ENCODE measurements at regions of chr15 and their contacts with region 1.

Region 1: DNA sequence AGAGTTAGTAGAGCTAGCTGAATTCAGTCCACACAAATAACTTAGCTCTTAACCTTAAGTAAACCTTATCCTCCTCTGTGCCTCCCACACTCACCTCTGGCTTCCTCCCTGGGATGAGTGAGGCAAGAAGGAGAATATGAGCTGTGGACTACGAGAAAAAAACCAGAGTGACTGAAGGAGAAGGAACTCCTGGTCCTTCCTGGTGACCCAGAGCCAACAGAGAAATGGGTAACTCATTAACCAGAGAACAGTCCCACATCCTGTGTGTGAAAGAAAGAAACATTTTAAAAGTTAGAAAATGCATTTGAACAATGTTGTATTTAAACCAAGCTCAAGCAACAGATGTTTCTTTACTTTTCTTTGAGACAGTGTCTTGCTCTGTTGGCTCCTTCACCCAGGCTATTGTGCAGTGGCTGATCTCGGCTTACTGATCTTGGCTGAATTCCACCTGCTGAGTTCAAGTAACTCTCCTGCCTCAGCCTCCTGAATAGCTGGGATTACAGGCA is 27.5 kb upstream of the FAM81A start:
- DNase-seq: no peak
- ATAC-seq: no peak
- H3K4me3 Mint-ChIP-seq: peak overlapping the region; percentile 73
- H3K27ac Mint-ChIP-seq: peak overlapping the region; percentile 98
- H3K4me1 Mint-ChIP-seq: peaks cover 84% of the 10 kb centered on the region
- H3K27me3 Mint-ChIP-seq: no peaks in the 10 kb centered on the region
- CTCF ChIP-seq: no peak

Region 2: DNA sequence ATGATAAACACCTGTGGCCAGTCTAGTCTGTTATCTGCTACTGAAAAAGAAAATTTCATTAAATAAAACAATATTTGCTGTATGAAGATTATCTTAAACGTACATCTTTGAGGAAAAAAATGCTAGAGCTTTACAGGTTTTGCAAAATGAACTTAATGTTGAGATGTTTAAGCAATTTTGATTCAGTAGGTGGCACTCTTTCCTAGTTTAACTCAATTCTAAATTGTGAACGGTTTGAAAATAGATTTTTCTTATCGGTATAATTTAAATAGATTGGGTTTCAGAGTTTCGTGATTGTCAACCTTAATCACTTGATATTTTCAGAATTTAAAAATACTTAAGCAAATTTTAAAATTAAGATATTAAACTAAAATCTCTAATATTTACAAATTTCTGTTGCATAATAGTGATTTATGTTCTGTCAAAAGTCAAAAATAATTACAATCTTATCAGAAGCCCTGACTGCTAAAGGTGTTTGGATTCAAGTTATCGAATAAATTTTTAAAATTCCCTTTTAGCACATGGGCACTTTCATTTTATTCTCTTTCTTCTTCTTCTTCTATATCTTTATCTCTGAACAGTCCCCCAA is 430.0 kb before region 1 on chr15:
- CTCF ChIA-PET with region 1: interaction called, 3 read pairs
- POLR2A ChIA-PET with region 1: interaction called, 4 read pairs
- intact Hi-C with region 1: loop called (anchors 2 kb)
- DNase-seq: no peak
- ATAC-seq: no peak
- H3K4me3 Mint-ChIP-seq: peak overlapping the region; percentile 73
- H3K27ac Mint-ChIP-seq: peak overlapping the region; percentile 96
- H3K4me1 Mint-ChIP-seq: peaks cover 62% of the 10 kb centered on the region
- H3K27me3 Mint-ChIP-seq: no peaks in the 10 kb centered on the region
- CTCF ChIP-seq: no peak

Region 3: DNA sequence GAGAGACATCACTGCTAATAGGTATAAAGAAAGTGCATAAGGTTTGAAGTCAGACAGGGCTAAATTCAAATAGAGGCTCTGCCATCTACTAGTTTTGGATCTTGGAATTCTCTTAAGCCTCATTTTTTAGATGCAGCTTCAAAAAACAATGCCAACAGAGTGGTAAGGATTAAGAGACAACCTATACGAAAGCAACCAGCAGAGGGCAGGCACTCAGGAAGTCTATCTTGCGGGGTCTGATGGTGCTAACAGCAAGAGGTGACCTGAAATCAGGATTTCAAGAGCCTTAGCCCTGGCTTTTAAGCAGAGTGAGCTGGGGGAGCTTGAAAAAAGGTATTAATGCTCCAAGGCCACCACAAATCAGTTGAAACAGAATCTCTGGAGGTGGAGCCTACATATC is 163.1 kb before region 1 on chr15:
- CTCF ChIA-PET with region 1: interaction called, 50 read pairs
- POLR2A ChIA-PET with region 1: interaction called, 22 read pairs
- intact Hi-C with region 1: loop called (anchors 1 kb)
- DNase-seq: no peak
- ATAC-seq: peak; percentile 52
- H3K4me3 Mint-ChIP-seq: no peak overlapping the region
- H3K27ac Mint-ChIP-seq: peak overlapping the region; percentile 24
- H3K4me1 Mint-ChIP-seq: peaks cover 71% of the 10 kb centered on the region
- H3K27me3 Mint-ChIP-seq: no peaks in the 10 kb centered on the region
- CTCF ChIP-seq: no peak

Region 4: GRCh38 chr15:59377940-59378339 is 32.5 kb before region 1 on chr15:
- CTCF ChIA-PET with region 1: interaction called, 11 read pairs
- POLR2A ChIA-PET with region 1: interaction called, 23 read pairs
- intact Hi-C with region 1: loop called (anchors 1 kb)
- DNase-seq: no peak
- ATAC-seq: no peak
- H3K4me3 Mint-ChIP-seq: no peak overlapping the region
- H3K27ac Mint-ChIP-seq: no peak overlapping the region
- H3K4me1 Mint-ChIP-seq: peaks cover 34% of the 10 kb centered on the region
- H3K27me3 Mint-ChIP-seq: no peaks in the 10 kb centered on the region
- CTCF ChIP-seq: no peak

Region 5: GRCh38 chr15:59432389-59432788 is 21.9 kb after region 1 on chr15:
- CTCF ChIA-PET with region 1: no interaction called
- POLR2A ChIA-PET with region 1: interaction called, 14 read pairs
- intact Hi-C with region 1: loop called (anchors 1 kb)
- DNase-seq: no peak
- ATAC-seq: no peak
- H3K4me3 Mint-ChIP-seq: no peak overlapping the region
- H3K27ac Mint-ChIP-seq: no peak overlapping the region
- H3K4me1 Mint-ChIP-seq: peaks cover 20% of the 10 kb centered on the region
- H3K27me3 Mint-ChIP-seq: peaks cover 3% of the 10 kb centered on the region
- CTCF ChIP-seq: no peak

Region 6: DNA sequence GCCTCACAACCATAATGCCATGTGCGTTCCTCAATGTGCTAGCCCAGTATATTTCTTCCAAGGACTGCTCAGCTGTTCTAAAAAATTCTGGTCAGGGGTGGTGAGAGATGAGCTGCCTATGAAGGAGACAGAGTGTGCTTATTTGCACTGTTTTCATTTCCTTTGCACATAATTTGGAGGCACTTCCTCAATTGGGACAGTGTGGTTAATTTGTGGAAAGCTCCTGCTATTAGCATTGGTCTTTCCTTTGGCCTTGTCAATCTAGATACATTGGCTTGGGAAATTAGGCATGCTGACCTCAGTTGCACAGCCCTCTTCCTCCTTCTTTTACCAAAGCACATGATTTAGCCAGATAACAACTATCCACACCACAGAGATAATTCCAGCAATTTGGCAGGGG is 36.9 kb after region 1 on chr15:
- CTCF ChIA-PET with region 1: no interaction called
- POLR2A ChIA-PET with region 1: no interaction called
- intact Hi-C with region 1: no loop called
- DNase-seq: no peak
- ATAC-seq: no peak
- H3K4me3 Mint-ChIP-seq: no peak overlapping the region
- H3K27ac Mint-ChIP-seq: no peak overlapping the region
- H3K4me1 Mint-ChIP-seq: peaks cover 28% of the 10 kb centered on the region
- H3K27me3 Mint-ChIP-seq: no peaks in the 10 kb centered on the region
- CTCF ChIP-seq: no peak

Region 7: GRCh38 chr15:59492389-59493377 is 82.2 kb after region 1 on chr15:
- CTCF ChIA-PET with region 1: interaction called, 10 read pairs
- POLR2A ChIA-PET with region 1: no interaction called
- intact Hi-C with region 1: no loop called
- DNase-seq: peak; percentile 31
- ATAC-seq: peak; percentile 93
- H3K4me3 Mint-ChIP-seq: no peak overlapping the region
- H3K27ac Mint-ChIP-seq: peak overlapping the region; percentile 1
- H3K4me1 Mint-ChIP-seq: peaks cover 10% of the 10 kb centered on the region
- H3K27me3 Mint-ChIP-seq: no peaks in the 10 kb centered on the region
- CTCF ChIP-seq: peak; percentile 87

Region 8: GRCh38 chr15:59594493-59594942 is 184.1 kb after region 1 on chr15:
- CTCF ChIA-PET with region 1: no interaction called
- POLR2A ChIA-PET with region 1: no interaction called
- intact Hi-C with region 1: no loop called
- DNase-seq: no peak
- ATAC-seq: no peak
- H3K4me3 Mint-ChIP-seq: no peak overlapping the region
- H3K27ac Mint-ChIP-seq: no peak overlapping the region
- H3K4me1 Mint-ChIP-seq: no peaks in the 10 kb centered on the region
- H3K27me3 Mint-ChIP-seq: peaks cover 3% of the 10 kb centered on the region
- CTCF ChIP-seq: no peak

Region 9: GRCh38 chr15:61275901-61276300 is 1865.5 kb after region 1 on chr15:
- CTCF ChIA-PET with region 1: no interaction called
- POLR2A ChIA-PET with region 1: no interaction called
- intact Hi-C with region 1: no loop called
- DNase-seq: no peak
- ATAC-seq: no peak
- H3K4me3 Mint-ChIP-seq: no peak overlapping the region
- H3K27ac Mint-ChIP-seq: no peak overlapping the region
- H3K4me1 Mint-ChIP-seq: no peaks in the 10 kb centered on the region
- H3K27me3 Mint-ChIP-seq: peaks cover 16% of the 10 kb centered on the region
- CTCF ChIP-seq: no peak